ENCODE measurements at regions of chr11 and their contacts with region 1.

Region 1: GRCh38 chr11:76734456-76735420 is 48.4 kb upstream of the TSKU start:
- DNase-seq: no peak
- H3K4me3 ChIP-seq: no peak overlapping the region
- H3K4me3 Mint-ChIP-seq: no peak overlapping the region
- H3K27ac Mint-ChIP-seq: no peak overlapping the region
- H3K4me1 ChIP-seq: peaks cover 11% of the 10 kb centered on the region
- H3K4me1 Mint-ChIP-seq: peaks cover 9% of the 10 kb centered on the region
- H3K27me3 ChIP-seq: no peaks in the 10 kb centered on the region; the same call in 1 of the 2 replicates
- H3K27me3 Mint-ChIP-seq: no peaks in the 10 kb centered on the region
- CTCF ChIP-seq: no peak

Region 2: GRCh38 chr11:76721755-76722677 is 12.7 kb before region 1 on chr11:
- CTCF ChIA-PET with region 1: interaction called, 18 read pairs
- POLR2A ChIA-PET with region 1: no interaction called
- intact Hi-C with region 1: no loop called
- DNase-seq: peak; percentile 85 to 91
- H3K4me3 ChIP-seq: no peak overlapping the region
- H3K4me3 Mint-ChIP-seq: no peak overlapping the region
- H3K27ac Mint-ChIP-seq: no peak overlapping the region
- H3K4me1 ChIP-seq: 0 out of 2 replicates have a peak, but pooled peaks cover 7% of the 10 kb centered on the region
- H3K4me1 Mint-ChIP-seq: peaks cover 5% of the 10 kb centered on the region
- H3K27me3 ChIP-seq: no peaks in the 10 kb centered on the region; the same call in 1 of the 2 replicates
- H3K27me3 Mint-ChIP-seq: peaks cover 5% of the 10 kb centered on the region
- CTCF ChIP-seq: peak; percentile 98

Region 3: GRCh38 chr11:76768088-76768908 is 33.6 kb after region 1 on chr11:
- CTCF ChIA-PET with region 1: interaction called, 18 read pairs
- POLR2A ChIA-PET with region 1: no interaction called
- intact Hi-C with region 1: no loop called
- DNase-seq: no peak
- H3K4me3 ChIP-seq: no peak overlapping the region
- H3K4me3 Mint-ChIP-seq: no peak overlapping the region
- H3K27ac Mint-ChIP-seq: peak overlapping the region; percentile 22
- H3K4me1 ChIP-seq: peaks cover 51% of the 10 kb centered on the region
- H3K4me1 Mint-ChIP-seq: peaks cover 46% of the 10 kb centered on the region
- H3K27me3 ChIP-seq: no peaks in the 10 kb centered on the region
- H3K27me3 Mint-ChIP-seq: no peaks in the 10 kb centered on the region
- CTCF ChIP-seq: no peak

Region 4: GRCh38 chr11:76782526-76783293 is 48.0 kb after region 1 on chr11:
- CTCF ChIA-PET with region 1: interaction called, 8 read pairs
- POLR2A ChIA-PET with region 1: no interaction called
- intact Hi-C with region 1: loop called (anchors 2 kb)
- DNase-seq: peak; percentile 98
- H3K4me3 ChIP-seq: peak overlapping the region; percentile 85
- H3K4me3 Mint-ChIP-seq: peak overlapping the region; percentile 79
- H3K27ac Mint-ChIP-seq: peak overlapping the region; percentile 71
- H3K4me1 ChIP-seq: peaks cover 31% of the 10 kb centered on the region
- H3K4me1 Mint-ChIP-seq: peaks cover 46% of the 10 kb centered on the region
- H3K27me3 ChIP-seq: no peaks in the 10 kb centered on the region
- H3K27me3 Mint-ChIP-seq: no peaks in the 10 kb centered on the region
- CTCF ChIP-seq: no peak

Region 5: DNA sequence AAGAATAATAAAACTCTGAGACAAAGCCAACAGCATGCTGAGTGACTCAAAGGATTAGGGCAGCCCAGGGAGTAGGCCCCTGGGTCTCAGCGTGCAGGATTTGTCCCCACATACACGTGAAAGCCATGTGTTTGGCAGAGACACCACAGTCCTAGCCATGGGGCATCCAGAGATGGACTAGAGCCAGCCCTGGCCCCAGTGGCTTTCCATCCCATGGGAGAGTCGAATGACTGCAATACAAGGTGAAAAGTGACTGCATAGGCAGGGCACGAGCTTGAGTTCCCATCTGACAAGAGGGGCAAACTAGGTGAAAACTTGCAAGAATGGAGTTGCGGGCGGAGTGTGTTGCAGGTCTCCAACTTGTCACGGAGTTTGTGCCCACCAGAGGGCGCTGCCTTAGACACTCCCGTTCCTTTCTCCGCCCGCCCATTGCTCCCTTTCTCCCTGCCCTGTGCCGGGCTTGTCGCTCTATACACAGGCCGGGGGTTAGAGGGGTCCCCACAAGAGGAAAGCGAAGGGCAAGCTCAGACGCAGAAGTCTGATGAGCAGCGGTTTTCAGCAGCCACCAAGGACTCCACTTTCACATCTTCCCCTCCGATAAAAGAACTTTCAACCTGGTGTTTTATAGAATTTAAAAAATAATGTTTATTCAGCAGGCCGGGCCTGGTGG is 72.6 kb after region 1 on chr11:
- CTCF ChIA-PET with region 1: interaction called, 20 read pairs
- POLR2A ChIA-PET with region 1: no interaction called
- intact Hi-C with region 1: loop called (anchors 1 kb)
- DNase-seq: peak; percentile 85 to 86
- H3K4me3 ChIP-seq: no peak overlapping the region
- H3K4me3 Mint-ChIP-seq: no peak overlapping the region
- H3K27ac Mint-ChIP-seq: no peak overlapping the region
- H3K4me1 ChIP-seq: peaks cover 8% of the 10 kb centered on the region
- H3K4me1 Mint-ChIP-seq: peaks cover under 1% of the 10 kb centered on the region
- H3K27me3 ChIP-seq: no peaks in the 10 kb centered on the region
- H3K27me3 Mint-ChIP-seq: no peaks in the 10 kb centered on the region
- CTCF ChIP-seq: peak; percentile 86 to 87

Region 6: GRCh38 chr11:76838678-76839068 is 103.9 kb after region 1 on chr11:
- CTCF ChIA-PET with region 1: interaction called, 4 read pairs
- POLR2A ChIA-PET with region 1: no interaction called
- intact Hi-C with region 1: loop called (anchors 1 kb)
- DNase-seq: peak; percentile 71 to 73
- H3K4me3 ChIP-seq: no peak overlapping the region
- H3K4me3 Mint-ChIP-seq: no peak overlapping the region
- H3K27ac Mint-ChIP-seq: no peak overlapping the region
- H3K4me1 ChIP-seq: peaks cover 13% of the 10 kb centered on the region
- H3K4me1 Mint-ChIP-seq: peaks cover 19% of the 10 kb centered on the region
- H3K27me3 ChIP-seq: no peaks in the 10 kb centered on the region
- H3K27me3 Mint-ChIP-seq: peaks cover 4% of the 10 kb centered on the region
- CTCF ChIP-seq: peak; percentile 35 to 78

Region 7: GRCh38 chr11:76997512-76997911 is 262.8 kb after region 1 on chr11:
- CTCF ChIA-PET with region 1: no interaction called
- POLR2A ChIA-PET with region 1: no interaction called
- intact Hi-C with region 1: no loop called
- DNase-seq: no peak
- H3K4me3 ChIP-seq: no peak overlapping the region
- H3K4me3 Mint-ChIP-seq: no peak overlapping the region
- H3K27ac Mint-ChIP-seq: no peak overlapping the region
- H3K4me1 ChIP-seq: 0 out of 2 replicates have a peak, but pooled peaks cover 12% of the 10 kb centered on the region
- H3K4me1 Mint-ChIP-seq: peaks cover 6% of the 10 kb centered on the region
- H3K27me3 ChIP-seq: no peaks in the 10 kb centered on the region
- H3K27me3 Mint-ChIP-seq: no peaks in the 10 kb centered on the region
- CTCF ChIP-seq: no peak